ENCODE measurements at regions of chr18 and their contacts with region 1.

Region 1: DNA sequence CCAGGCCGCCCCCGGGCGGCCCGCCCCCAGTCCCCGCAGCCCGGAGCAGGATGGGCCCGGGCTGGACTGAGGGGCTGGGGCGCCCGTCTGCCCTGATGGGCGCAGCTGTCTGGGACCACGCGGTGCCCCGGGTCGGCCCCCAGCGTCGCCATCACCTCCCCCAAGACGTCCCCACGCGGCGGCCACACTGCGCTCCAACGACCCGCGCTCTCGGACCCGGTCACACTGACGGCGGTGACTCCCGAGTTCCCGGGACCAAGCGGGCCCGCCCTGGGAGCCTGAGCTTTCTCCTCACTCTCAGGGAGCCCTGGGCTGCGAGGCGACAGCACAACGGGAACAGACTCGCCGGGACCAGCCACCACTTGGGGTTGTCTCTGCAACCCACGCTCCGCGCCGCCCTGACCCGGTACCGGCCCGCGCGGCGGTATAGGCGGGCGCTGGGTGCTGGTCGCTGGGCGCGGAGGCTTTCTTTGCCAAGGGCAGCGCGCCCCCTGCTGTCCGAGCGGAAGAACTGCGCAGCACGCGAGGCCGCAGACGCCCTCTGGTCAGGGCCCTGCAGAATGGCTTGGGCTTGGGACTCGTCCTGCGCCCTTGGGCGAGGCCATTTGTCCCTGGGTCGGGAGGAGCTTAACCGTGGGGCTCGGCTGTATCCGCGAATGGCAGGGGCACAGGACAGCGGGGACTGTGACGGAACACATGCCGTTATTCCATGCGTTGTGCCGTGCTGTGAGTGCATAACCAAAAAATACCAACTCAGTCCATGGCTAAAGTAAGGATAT is 54.8 kb upstream of the ANKRD62 start:
- DNase-seq: peak; percentile 90
- ATAC-seq: peak; percentile 89
- H3K4me3 Mint-ChIP-seq: peak overlapping the region; percentile 68
- H3K27ac Mint-ChIP-seq: no peak overlapping the region
- H3K4me1 Mint-ChIP-seq: 0 out of 2 replicates have a peak, but pooled peaks cover 4% of the 10 kb centered on the region
- H3K27me3 Mint-ChIP-seq: peaks cover 25% of the 10 kb centered on the region
- CTCF ChIP-seq: peak; percentile 97

Region 2: DNA sequence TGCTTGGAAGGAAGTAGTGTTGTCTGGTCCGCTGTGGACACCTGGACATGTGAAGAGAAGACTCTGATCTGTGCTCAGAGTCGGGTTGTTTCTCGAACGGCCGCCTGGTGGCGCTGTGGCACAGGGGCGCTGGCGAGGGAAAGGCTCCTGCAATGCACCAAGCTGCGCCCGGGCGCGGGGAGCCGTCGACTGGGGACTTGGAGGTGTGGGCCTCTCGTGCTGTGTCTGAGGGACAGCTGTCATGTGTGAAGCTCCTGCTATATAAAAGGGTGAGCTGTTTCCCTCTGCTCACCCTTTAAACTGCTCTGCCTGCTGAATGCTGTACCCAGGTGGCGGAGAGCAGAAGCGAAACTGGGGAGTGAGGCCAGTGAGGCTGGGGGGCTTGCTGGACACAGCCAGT is 305.8 kb before region 1 on chr18:
- CTCF ChIA-PET with region 1: interaction called, 30 read pairs
- POLR2A ChIA-PET with region 1: no interaction called
- DNase-seq: peak; percentile 90
- ATAC-seq: peak; percentile 91
- H3K4me3 Mint-ChIP-seq: no peak overlapping the region
- H3K27ac Mint-ChIP-seq: no peak overlapping the region
- H3K4me1 Mint-ChIP-seq: peaks cover 11% of the 10 kb centered on the region
- H3K27me3 Mint-ChIP-seq: peaks cover 3% of the 10 kb centered on the region; the same call in 1 of the 2 replicates
- CTCF ChIP-seq: peak; percentile 99

Region 3: DNA sequence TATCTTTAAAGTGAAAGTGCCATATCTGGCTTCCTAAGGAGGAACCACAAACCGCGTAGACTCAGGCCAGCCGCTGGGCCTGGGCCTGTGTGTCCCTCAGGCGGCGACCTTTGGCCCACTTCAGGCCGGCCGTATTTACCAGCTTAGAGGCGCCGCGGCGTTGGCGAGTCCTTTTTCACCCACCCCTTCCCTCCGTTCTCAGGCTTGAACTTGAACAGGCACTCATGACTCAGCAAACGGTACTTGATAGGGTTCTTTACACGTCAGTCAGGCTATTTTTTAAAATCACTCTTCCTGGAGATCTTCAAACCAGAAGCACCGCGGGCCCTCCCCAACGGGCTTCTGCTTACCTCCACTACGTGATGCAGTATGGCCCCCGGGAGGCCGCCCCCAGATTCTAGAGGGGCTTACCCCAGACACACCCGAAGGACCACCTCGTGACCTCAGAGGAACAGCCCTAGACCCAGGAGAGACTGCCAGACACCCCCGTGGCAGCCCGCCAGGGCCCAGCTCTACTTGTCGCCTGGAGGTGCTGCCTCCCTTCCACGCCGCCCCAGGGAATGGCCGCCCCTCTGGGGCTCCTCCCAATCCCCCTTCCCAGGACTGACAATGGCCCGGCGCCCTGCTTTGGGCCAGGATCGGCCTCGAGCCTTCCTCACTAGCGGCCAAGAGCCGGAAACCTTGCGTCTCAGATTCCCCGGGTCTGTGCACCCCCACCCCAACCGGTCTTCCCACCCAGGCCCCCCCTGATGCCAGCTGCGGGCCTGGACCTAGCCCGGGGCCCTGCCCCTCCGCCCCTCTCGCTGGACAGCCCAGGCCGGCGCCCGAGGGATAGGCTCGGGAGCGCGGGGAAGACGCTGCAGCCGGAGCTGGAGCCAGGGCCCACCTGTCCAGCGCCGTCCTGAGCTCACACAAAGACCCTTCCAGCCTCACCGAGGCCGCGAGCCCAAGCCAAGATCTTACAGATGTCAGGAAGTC is 91.3 kb before region 1 on chr18:
- CTCF ChIA-PET with region 1: interaction called, 17 read pairs
- POLR2A ChIA-PET with region 1: no interaction called
- DNase-seq: peak; percentile 75
- ATAC-seq: peak; percentile 79
- H3K4me3 Mint-ChIP-seq: peak overlapping the region; percentile 89
- H3K27ac Mint-ChIP-seq: peak overlapping the region; percentile 92
- H3K4me1 Mint-ChIP-seq: peaks cover 35% of the 10 kb centered on the region
- H3K27me3 Mint-ChIP-seq: no peaks in the 10 kb centered on the region
- CTCF ChIP-seq: no peak

Region 4: DNA sequence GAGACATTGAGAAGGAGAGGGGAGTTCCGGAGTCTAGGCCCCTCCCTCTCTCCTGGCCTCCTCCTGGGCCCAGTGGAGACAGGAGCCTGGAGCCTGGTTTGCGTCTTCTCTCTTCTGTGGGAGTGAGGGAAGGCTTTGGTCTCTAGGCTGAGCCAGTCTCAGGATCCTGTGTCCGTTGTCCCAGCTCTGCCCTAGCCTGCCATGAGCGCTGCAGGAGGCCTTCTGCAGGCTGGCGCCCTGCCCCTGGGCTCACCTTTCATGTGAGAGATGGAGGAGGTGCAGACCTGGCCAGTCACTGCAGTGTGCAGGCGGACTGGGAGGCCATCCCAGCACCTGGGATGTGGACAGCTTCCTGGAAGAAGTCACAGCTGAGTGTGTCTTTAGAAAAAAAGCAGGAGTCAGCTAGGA is 48.9 kb before region 1 on chr18:
- CTCF ChIA-PET with region 1: interaction called, 31 read pairs
- POLR2A ChIA-PET with region 1: no interaction called
- DNase-seq: peak; percentile 21
- ATAC-seq: peak; percentile 76
- H3K4me3 Mint-ChIP-seq: no peak overlapping the region
- H3K27ac Mint-ChIP-seq: no peak overlapping the region; the same call in none of the 2 replicates
- H3K4me1 Mint-ChIP-seq: peaks cover 77% of the 10 kb centered on the region
- H3K27me3 Mint-ChIP-seq: no peaks in the 10 kb centered on the region
- CTCF ChIP-seq: no peak

Region 5: GRCh38 chr18:12049978-12050811 is 11.4 kb after region 1 on chr18:
- CTCF ChIA-PET with region 1: interaction called, 32 read pairs
- POLR2A ChIA-PET with region 1: no interaction called
- DNase-seq: no peak
- ATAC-seq: no peak
- H3K4me3 Mint-ChIP-seq: no peak overlapping the region
- H3K27ac Mint-ChIP-seq: no peak overlapping the region
- H3K4me1 Mint-ChIP-seq: 0 out of 2 replicates have a peak, but pooled peaks cover 3% of the 10 kb centered on the region
- H3K27me3 Mint-ChIP-seq: no peaks in the 10 kb centered on the region; the same call in 1 of the 2 replicates
- CTCF ChIP-seq: no peak

Region 6: GRCh38 chr18:12236934-12237832 is 198.4 kb after region 1 on chr18:
- CTCF ChIA-PET with region 1: interaction called, 11 read pairs
- POLR2A ChIA-PET with region 1: no interaction called
- DNase-seq: peak; percentile 89
- ATAC-seq: peak; percentile 98
- H3K4me3 Mint-ChIP-seq: no peak overlapping the region
- H3K27ac Mint-ChIP-seq: no peak overlapping the region
- H3K4me1 Mint-ChIP-seq: no peaks in the 10 kb centered on the region
- H3K27me3 Mint-ChIP-seq: peaks cover 6% of the 10 kb centered on the region
- CTCF ChIP-seq: peak; percentile 93

Region 7: GRCh38 chr18:12531749-12532148 is 492.9 kb after region 1 on chr18:
- CTCF ChIA-PET with region 1: no interaction called
- POLR2A ChIA-PET with region 1: no interaction called
- DNase-seq: no peak
- ATAC-seq: no peak
- H3K4me3 Mint-ChIP-seq: no peak overlapping the region
- H3K27ac Mint-ChIP-seq: no peak overlapping the region
- H3K4me1 Mint-ChIP-seq: 0 out of 2 replicates have a peak, but pooled peaks cover 4% of the 10 kb centered on the region
- H3K27me3 Mint-ChIP-seq: no peaks in the 10 kb centered on the region
- CTCF ChIP-seq: no peak